CD8-positive, alpha-beta T cell (primary cell): ENCODE measurements at regions of chr1 and their contacts with region 1.

Region 1: GRCh38 chr1:74689621-74690363 is 16.2 kb upstream of the ERICH3 start:
- DNase-seq: peak in 7 of 9 experiments; percentile 4 to 64 (median 38)
- ATAC-seq: no peak
- H3K4me3 ChIP-seq: no peak overlapping the region
- H3K4me3 Mint-ChIP-seq: no peak overlapping the region
- H3K27ac ChIP-seq: no peak overlapping the region
- H3K27ac Mint-ChIP-seq: no peak overlapping the region
- H3K4me1 ChIP-seq: no peaks in the 10 kb centered on the region
- H3K4me1 Mint-ChIP-seq: no peaks in the 10 kb centered on the region
- H3K27me3 ChIP-seq: no peaks in the 10 kb centered on the region
- H3K27me3 Mint-ChIP-seq: peaks cover 7% of the 10 kb centered on the region
- CTCF ChIP-seq: peak; percentile 91

Region 2: DNA sequence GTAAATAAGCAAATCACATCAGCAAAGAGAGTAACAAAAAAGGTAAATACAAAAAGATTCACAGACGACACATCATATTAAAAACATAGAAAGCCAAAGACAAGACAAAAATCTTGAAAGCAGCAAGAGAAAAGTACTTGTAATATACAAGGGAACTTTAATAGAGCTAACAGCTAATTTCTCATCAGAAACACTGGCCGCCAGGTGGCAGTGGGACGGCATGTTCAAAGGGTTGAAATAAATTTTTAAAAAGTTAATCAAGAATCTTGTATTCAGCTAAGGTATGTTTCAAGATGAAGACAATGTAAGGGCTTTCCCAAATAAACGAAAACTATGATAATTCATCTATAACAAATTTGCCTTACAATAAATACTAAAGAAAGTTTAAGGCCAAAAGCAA is 849.9 kb before region 1 on chr1:
- CTCF ChIA-PET with region 1: no interaction called
- POLR2A ChIA-PET with region 1: no interaction called
- intact Hi-C with region 1: loop called in 1 of 2 experiments (anchors 10 kb)
- DNase-seq: no peak
- ATAC-seq: no peak
- H3K4me3 ChIP-seq: no peak overlapping the region
- H3K4me3 Mint-ChIP-seq: no peak overlapping the region
- H3K27ac ChIP-seq: no peak overlapping the region
- H3K27ac Mint-ChIP-seq: no peak overlapping the region
- H3K4me1 ChIP-seq: no peaks in the 10 kb centered on the region
- H3K4me1 Mint-ChIP-seq: no peaks in the 10 kb centered on the region
- H3K27me3 ChIP-seq: no peaks in the 10 kb centered on the region
- H3K27me3 Mint-ChIP-seq: no peaks in the 10 kb centered on the region
- CTCF ChIP-seq: no peak

Region 3: DNA sequence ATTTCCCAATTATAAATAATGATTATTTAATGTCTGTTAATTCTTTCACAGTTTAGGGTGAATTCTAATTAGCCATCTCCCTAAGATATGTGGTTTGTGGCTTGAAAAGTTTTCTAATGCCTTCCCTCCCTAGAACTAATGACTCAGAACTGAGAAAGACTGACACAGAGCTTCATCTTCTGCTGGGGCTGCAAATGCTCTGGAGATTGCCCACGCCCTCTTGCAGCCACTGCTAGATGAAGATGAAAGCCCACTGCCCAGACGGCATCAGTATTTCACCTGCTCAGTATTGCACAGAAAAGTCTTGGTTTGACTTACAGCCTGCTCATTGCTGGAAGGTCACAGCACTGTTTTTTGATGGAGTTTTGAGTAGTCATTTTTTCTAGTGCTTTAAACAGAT is 1486.2 kb after region 1 on chr1:
- CTCF ChIA-PET with region 1: no interaction called
- POLR2A ChIA-PET with region 1: no interaction called
- intact Hi-C with region 1: no loop called
- DNase-seq: no peak
- ATAC-seq: no peak
- H3K4me3 ChIP-seq: no peak overlapping the region
- H3K4me3 Mint-ChIP-seq: no peak overlapping the region
- H3K27ac ChIP-seq: no peak overlapping the region
- H3K27ac Mint-ChIP-seq: no peak overlapping the region
- H3K4me1 ChIP-seq: no peaks in the 10 kb centered on the region
- H3K4me1 Mint-ChIP-seq: peaks cover 7% of the 10 kb centered on the region
- H3K27me3 ChIP-seq: no peaks in the 10 kb centered on the region
- H3K27me3 Mint-ChIP-seq: no peaks in the 10 kb centered on the region
- CTCF ChIP-seq: no peak